ENCODE measurements at regions of chr1 and their contacts with region 1.

Region 1: DNA sequence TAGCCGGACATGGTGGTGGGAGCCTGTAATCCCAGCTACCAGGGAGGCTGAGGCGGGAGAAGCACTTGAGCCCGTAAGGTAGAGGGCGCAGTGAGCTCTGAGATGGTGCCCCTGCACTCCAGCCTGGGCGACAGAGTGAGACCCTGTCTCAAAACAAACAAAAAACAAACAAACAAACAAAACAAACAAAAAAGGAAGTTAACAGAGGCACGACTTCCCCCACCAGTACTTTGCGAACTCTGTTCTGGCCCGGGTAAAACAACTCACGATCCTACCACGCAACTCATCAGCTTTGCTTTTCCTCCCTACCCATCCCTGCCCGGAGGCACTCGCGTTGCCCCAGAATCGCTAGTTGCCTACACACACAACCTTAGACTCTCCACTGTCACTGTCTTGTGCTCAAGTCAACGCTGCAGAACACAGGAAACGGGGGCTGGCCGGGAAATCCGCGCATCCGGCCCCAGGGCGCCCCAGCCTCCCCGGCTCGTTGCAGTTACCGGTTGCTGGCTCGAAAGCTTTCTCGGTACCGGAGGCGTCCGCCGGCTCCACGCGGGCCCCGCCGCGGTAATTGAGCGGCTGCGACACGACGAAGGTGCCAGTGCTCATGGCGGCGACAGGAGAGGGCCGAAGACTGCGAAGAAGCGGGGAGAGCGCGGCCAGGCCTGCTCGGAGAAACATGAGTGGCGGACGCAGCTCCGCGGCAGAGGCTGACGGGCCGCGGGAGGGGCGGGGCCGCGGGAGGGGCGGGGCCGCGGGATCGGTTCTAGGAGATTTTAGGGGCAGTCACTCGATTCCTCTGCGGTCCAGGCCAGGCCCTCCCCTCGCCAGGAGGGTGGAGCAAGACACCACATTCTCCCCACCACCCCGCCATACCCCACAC is at the start of gene ALDH9A1:
- DNase-seq: peak; percentile 74 to 90 (median 82)
- ATAC-seq: peak; percentile 87
- H3K4me3 ChIP-seq: peak within 1 kb of the TSS; percentile 65 to 87
- H3K4me3 Mint-ChIP-seq: peak within 1 kb of the TSS; percentile 98
- H3K27ac ChIP-seq: peak within 1 kb of the TSS; percentile 80 to 91
- H3K27ac Mint-ChIP-seq: peak within 1 kb of the TSS; percentile 95
- H3K4me1 ChIP-seq: peaks cover 25% of the 10 kb centered on the region
- H3K4me1 Mint-ChIP-seq: peaks cover 39% of the 10 kb centered on the region
- H3K27me3 ChIP-seq: peaks cover 0 to under 1% of the 10 kb centered on the region in 2 experiments
- H3K27me3 Mint-ChIP-seq: peaks cover 2% of the 10 kb centered on the region
- CTCF ChIP-seq: no peak
- total RNA-seq, gene ALDH9A1: 18.7 to 22.0 TPM

Region 2: DNA sequence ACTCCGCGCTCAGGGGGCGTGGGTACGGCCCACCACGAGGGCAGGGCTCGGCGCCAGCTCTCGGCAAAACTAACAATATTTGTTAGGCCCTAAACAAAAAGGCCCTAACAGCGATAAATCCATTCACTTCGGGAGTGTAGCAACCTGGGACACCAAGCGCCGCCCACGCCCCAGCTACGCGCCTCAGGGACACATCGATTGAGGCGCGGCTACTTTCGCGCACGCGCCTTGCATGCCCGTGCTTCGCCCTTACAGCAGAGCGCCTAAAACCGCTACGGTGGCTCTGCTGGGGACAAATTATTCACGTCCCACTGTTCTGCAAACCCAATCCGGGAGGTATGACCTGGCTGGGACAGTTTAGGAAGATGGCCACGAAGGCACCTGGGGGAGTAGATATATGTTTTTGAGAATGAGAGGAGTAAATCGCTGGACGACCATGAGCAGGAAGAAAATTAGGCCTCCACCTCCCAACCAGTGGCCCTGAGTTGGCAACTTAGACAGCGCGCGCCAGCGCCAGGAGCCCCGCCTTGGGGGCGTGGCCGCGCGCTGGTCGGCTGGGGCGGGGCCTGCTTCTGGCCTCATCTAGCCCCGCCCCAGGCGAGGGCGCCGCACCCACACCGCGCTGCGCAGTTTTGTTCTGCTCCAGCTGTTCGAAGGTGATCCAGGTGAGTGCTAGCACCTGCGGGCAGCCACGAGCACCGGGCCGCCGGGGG is 67.3 kb before region 1 on chr1 and contains the start of gene MGST3:
- CTCF ChIA-PET with region 1: no interaction called
- POLR2A ChIA-PET with region 1: interaction called, 6 read pairs
- intact Hi-C with region 1: loop called (anchors 1 kb)
- DNase-seq: peak; percentile 81 to 96 (median 91)
- ATAC-seq: peak; percentile 93
- H3K4me3 ChIP-seq: peak within 1 kb of the TSS; percentile 62 to 71
- H3K4me3 Mint-ChIP-seq: no peak within 1 kb of the TSS
- H3K27ac ChIP-seq: peak within 1 kb of the TSS; percentile 56 to 89
- H3K27ac Mint-ChIP-seq: peak within 1 kb of the TSS; percentile 66
- H3K4me1 ChIP-seq: peaks cover 17% of the 10 kb centered on the region
- H3K4me1 Mint-ChIP-seq: peaks cover 19% of the 10 kb centered on the region
- H3K27me3 ChIP-seq: no peaks in the 10 kb centered on the region
- H3K27me3 Mint-ChIP-seq: no peaks in the 10 kb centered on the region
- CTCF ChIP-seq: no peak
- total RNA-seq, gene MGST3: 13.8 to 16.6 TPM

Region 3: GRCh38 chr1:165679282-165680036 is 18.7 kb before region 1 on chr1:
- CTCF ChIA-PET with region 1: no interaction called
- POLR2A ChIA-PET with region 1: interaction called, 3 read pairs
- intact Hi-C with region 1: loop called in 1 of 2 experiments (anchors 1 kb)
- DNase-seq: no peak
- ATAC-seq: no peak
- H3K4me3 ChIP-seq: no peak overlapping the region
- H3K4me3 Mint-ChIP-seq: no peak overlapping the region
- H3K27ac ChIP-seq: no peak overlapping the region
- H3K27ac Mint-ChIP-seq: peak overlapping the region; percentile 2
- H3K4me1 ChIP-seq: peaks cover 15% of the 10 kb centered on the region
- H3K4me1 Mint-ChIP-seq: peaks cover 20% of the 10 kb centered on the region
- H3K27me3 ChIP-seq: no peaks in the 10 kb centered on the region
- H3K27me3 Mint-ChIP-seq: no peaks in the 10 kb centered on the region
- CTCF ChIP-seq: no peak

Region 4: DNA sequence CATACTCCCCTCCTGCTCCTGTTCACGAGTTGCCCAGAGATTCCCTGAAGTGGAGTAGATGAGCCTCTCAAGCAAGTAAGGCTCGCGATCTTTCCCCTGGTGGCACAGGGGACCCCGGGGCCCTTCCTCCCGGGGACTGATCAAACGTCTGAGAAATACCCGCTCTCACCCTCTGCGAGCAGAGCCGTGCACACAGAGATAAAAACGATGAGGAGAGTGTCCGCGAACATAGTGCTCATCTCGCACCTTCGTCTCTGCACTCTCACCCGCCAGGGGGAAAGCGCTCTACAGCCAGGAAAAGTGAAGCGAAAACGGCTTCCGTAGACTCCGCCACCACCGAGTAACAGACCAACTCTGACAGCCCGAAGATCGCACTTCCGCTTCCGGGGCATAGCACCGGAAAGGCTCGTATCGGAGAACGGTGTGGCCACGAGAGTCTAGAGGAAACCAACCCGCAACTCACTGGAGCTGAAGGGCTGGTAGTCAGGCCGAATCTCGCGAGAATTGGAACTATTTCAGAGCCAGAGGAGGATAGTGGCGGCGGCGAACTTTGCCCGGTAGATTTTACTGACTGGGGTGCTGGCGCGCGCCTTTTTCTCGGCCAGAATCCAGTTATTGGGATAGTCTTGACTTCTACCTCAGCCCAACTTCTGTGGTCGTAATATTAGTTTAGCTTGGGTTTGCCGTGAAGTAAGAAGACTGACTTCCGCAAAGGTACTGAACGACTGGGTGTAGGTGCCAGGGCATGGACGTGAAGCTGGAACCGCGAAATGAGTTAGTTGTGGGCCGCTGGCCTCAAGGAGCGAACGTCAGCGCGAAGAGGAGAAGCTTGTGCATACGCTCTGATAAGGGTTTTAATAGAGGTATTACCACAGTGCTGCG is 70.6 kb after region 1 on chr1 and contains the start of gene TMCO1:
- CTCF ChIA-PET with region 1: no interaction called
- POLR2A ChIA-PET with region 1: interaction called, 20 read pairs
- intact Hi-C with region 1: loop called (anchors 1 kb)
- DNase-seq: peak; percentile 84 to 99 (median 92)
- ATAC-seq: peak; percentile 93
- H3K4me3 ChIP-seq: peak within 1 kb of the TSS; percentile 85 to 93
- H3K4me3 Mint-ChIP-seq: peak within 1 kb of the TSS; percentile 99
- H3K27ac ChIP-seq: peak within 1 kb of the TSS; percentile 71 to 96
- H3K27ac Mint-ChIP-seq: peak within 1 kb of the TSS; percentile 99
- H3K4me1 ChIP-seq: peaks cover 50% of the 10 kb centered on the region
- H3K4me1 Mint-ChIP-seq: peaks cover 65% of the 10 kb centered on the region
- H3K27me3 ChIP-seq: no peaks in the 10 kb centered on the region
- H3K27me3 Mint-ChIP-seq: no peaks in the 10 kb centered on the region
- CTCF ChIP-seq: peak; percentile 24
- total RNA-seq, gene TMCO1: 30.5 to 33.5 TPM

Region 5: DNA sequence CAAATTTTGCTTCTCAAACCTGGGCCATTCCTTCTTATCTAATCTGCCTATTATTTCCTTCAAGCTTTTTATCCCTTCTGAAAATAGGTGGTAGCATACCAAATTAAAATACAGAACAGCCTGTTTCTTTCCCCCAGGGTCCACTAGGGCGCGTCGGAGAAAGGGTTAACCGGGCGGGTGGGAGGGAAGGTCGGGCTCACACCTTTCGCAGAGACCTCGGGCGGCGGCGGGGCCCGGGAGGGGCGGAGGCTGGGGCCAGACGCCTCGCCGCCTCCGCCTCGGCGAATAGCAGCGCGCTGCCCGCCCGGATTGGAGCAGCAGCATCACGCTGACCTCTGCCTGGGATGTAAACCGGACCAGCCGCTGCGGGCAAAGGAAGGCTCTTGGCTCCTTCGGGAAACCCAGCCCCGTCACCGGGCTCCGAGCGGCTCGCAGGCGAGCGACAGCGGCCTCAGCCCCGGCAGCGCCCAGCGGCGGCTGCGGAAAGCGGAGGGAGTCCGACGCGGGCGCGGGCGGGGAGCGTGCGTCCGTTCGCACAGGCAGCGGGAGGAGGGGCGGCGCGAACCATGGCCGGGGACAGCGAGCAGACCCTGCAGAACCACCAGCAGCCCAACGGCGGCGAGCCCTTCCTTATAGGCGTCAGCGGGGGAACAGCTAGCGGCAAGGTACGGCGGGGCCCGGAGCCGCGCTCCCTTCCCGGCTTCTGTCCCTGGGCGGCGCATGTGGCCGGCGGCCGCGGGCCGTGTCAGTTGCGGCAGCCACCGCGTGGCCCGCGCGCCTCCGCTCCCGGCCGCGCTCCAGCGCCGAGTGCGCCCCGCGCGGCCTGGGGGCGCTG is 129.4 kb after region 1 on chr1 and contains the start of gene UCK2:
- CTCF ChIA-PET with region 1: no interaction called
- POLR2A ChIA-PET with region 1: no interaction called
- intact Hi-C with region 1: loop called (anchors 5 kb)
- DNase-seq: peak; percentile 4 to 74 (median 47)
- ATAC-seq: peak; percentile 75
- H3K4me3 ChIP-seq: peak within 1 kb of the TSS; percentile 72 to 81
- H3K4me3 Mint-ChIP-seq: peak within 1 kb of the TSS; percentile 89
- H3K27ac ChIP-seq: peak within 1 kb of the TSS; percentile 33 to 43
- H3K27ac Mint-ChIP-seq: peak within 1 kb of the TSS; percentile 81
- H3K4me1 ChIP-seq: peaks cover 11% of the 10 kb centered on the region
- H3K4me1 Mint-ChIP-seq: peaks cover 21% of the 10 kb centered on the region
- H3K27me3 ChIP-seq: no peaks in the 10 kb centered on the region
- H3K27me3 Mint-ChIP-seq: peaks cover 2% of the 10 kb centered on the region
- CTCF ChIP-seq: no peak
- total RNA-seq, gene UCK2: 1.1 to 1.7 TPM

Region 6: DNA sequence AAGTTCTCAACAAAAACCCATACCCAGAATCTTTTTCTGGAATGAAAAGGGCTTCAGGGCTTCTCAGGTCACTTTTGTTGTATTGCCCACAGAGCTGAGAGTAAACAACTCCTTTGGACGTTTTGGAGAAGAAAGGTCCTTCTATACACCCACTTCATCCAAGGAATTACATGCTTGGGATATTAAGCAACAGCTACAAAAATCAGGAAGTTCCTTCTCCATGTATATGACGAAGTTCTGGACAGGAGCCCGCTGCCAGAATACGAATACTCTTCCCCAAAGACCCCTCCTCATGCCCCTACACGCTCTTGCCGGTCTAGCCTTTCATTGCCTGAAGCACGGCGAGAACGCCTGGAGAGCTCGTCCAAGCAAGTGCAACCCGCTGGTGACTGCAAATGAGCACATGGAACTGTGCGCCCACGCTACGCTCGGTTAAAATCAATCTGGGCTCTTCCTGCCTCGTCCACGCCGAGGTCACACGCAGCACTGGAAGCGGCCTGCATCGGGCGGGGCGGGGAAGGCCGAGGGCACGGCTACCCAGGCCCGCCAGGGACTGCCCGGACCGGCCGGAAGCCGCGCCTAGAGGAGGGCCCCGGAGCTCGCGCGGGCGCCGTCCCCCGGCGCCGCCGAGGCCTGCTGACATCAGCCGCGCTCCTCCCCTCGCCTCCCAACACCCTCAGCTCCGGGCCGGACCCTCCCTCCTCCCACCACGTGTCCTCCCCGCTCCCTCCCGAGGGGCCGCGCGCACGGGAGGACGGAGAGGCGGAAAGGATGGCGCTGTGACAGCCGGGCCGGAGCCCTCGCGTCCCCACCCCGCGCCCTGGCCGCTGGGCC is 1140.9 kb after region 1 on chr1 and contains the start of gene POGK:
- CTCF ChIA-PET with region 1: no interaction called
- POLR2A ChIA-PET with region 1: no interaction called
- intact Hi-C with region 1: loop called in 1 of 2 experiments (anchors 5 kb)
- DNase-seq: peak; percentile 56 to 92 (median 80)
- ATAC-seq: peak; percentile 88
- H3K4me3 ChIP-seq: peak within 1 kb of the TSS; percentile 68 to 72
- H3K4me3 Mint-ChIP-seq: peak within 1 kb of the TSS; percentile 92
- H3K27ac ChIP-seq: peak within 1 kb of the TSS; percentile 71 to 75
- H3K27ac Mint-ChIP-seq: peak within 1 kb of the TSS; percentile 98
- H3K4me1 ChIP-seq: peaks cover 28% of the 10 kb centered on the region
- H3K4me1 Mint-ChIP-seq: peaks cover 41% of the 10 kb centered on the region
- H3K27me3 ChIP-seq: no peaks in the 10 kb centered on the region
- H3K27me3 Mint-ChIP-seq: no peaks in the 10 kb centered on the region
- CTCF ChIP-seq: no peak
- total RNA-seq, gene POGK: 14.9 to 16.1 TPM